ENCODE measurements at regions of chr17 and their contacts with region 1.

Region 1: DNA sequence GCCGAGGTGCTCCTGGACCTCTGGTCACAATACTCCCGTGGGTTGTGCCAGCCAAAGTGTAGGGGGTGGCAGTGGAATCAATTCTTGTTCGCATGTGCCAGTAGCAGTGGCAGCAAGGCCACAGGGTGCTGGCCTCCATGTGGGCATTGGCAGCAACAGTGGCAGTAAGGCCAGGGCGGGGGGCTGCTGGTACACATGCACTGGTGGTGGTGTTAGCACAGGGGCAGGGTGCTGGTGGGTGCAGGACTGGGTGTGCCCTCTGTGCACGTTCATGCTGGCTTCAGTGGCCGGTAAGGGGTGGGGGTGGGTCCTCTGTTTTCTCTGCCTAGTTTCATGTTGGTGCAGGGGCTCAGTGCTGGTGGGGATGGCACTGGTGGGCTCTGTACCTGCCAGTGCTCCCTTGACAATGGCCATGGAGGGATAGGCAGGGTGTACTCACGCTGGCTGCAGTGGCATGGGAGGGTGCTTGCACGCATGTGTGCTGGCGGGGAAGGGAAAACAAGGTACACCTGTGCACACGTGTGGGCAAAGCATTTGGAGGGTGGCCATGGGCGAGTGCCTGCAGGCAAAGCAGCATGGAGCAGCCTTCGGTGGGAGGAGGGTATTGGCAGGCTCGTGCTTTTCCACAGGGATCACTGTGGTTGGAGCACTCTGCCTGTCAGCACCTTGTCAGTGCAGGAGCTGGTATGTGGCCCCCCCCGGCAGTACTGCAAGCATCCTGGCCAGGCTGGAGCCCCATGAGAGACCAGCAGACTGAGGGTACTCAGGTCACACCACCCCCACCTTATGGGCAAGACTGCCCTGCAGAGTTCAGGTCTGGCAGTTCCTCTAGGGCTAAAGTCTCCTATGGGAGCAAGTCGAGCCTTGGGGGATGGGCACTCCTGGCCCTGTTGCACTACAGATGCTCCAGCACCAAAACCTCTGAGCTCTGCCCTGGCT is 35.8 kb downstream of the NF1 start:
- DNase-seq: no peak
- H3K4me3 ChIP-seq: no peak overlapping the region
- H3K27ac ChIP-seq: no peak overlapping the region
- H3K4me1 ChIP-seq: no peaks in the 10 kb centered on the region
- CTCF ChIP-seq: no peak

Region 2: DNA sequence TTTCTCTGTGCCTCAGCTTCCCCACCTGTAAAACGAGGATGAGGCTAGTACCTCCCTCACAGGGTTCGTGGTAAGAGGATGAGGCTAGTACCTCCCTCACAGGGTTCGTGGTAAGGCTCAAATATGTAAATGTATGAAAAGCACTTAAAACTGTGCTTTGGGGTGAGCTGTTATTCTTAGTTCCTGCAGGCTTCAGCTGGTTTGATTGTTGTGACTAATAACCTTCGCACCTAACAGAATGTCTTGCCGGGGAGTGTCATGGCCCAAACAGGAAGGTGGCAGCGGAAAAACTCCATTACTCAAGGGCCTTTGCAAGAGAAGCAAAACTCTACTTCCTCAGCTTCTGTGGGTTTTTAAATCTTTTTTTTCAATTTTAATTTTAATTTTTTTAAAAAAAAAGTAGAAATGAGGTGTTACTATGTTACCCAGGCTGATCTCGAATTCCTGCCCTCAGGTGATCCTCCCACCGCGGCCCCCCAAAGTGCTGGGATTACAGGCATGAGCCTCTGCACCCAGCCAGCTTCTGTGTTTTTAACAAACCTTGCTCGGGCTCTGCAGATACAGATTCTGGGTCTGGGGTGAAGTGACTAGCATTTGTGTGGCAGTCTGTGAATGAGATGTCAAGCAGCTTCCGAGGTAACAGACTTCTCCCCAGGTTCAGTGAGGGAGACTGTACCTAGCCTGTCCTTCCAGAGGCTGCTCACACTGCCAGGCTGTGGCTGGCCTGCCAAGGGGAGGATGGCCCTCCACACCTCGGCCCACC is 363.9 kb after region 1 on chr17:
- CTCF ChIA-PET with region 1: interaction called, 10 read pairs
- POLR2A ChIA-PET with region 1: no interaction called
- intact Hi-C with region 1: no loop called
- DNase-seq: peak; percentile 46
- H3K4me3 ChIP-seq: no peak overlapping the region
- H3K27ac ChIP-seq: peak overlapping the region; percentile 7
- H3K4me1 ChIP-seq: peaks cover 64% of the 10 kb centered on the region
- CTCF ChIP-seq: no peak